Heart right ventricle (tissue), 16 donors: ENCODE measurements at regions of chr17 and their contacts with region 1.

Region 1: GRCh38 chr17:42019509-42020404 is at the start of gene NKIRAS2:
- DNase-seq: peak; percentile 94 to 95
- ATAC-seq: peak; percentile 76 to 84 (median 80)
- H3K4me3 ChIP-seq: peak within 1 kb of the TSS; percentile 73 to 98 (median 92)
- H3K27ac ChIP-seq: peak within 1 kb of the TSS; percentile 52 to 96 (median 90)
- H3K4me1 ChIP-seq: peaks cover 7 to 65% (median 49%) of the 10 kb centered on the region in 9 donors
- H3K27me3 ChIP-seq: no peaks in the 10 kb centered on the region
- CTCF ChIP-seq: peak; percentile 84 to 98 (median 96)
- total RNA-seq, gene NKIRAS2: 50.1 to 64.1 (median 57.2) TPM

Region 2: DNA sequence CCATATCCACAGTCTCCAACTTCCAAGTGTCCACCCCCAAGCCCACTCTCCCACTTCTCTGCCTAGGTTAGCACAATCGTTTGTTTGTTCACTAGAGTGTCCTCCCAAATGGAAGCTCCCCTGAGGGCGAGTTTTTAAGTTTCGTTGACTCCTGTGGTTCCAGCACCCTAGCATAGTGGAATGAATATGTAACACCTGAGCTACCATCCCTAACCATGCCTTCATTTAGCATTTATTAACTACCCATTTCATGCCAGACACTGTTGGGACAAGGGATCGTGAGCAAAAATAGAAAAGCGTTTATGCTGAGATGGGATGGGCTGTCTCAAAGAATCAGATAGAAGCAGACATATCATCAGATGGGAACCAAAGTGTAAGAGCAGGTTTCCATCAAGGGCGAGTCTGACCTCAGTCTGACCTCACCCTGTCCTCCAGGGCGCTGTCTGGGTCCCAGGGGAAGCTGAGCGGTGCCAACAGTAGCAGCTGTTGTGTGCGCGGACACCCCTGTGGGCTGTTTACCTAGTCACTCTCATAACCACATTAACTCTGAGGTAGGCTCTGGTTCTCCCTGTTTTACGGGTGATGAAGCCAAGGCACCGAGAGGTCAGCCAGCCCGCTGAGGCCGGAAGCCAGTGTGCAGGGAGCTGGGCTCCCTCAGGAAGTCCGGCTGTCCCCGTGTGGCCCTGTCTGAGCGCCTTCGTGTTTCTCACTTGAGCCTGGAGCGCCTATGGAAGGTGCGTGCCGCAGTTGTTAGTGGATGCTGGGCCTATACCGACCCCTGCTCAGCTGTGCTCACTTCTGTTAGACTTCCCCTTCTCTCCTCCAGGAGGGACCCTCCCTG is 47.0 kb before region 1 on chr17:
- intact Hi-C with region 1: loop called in 7 of 10 experiments (anchors 5 kb)
- DNase-seq: peak; percentile 49 to 55
- ATAC-seq: peak; percentile 27 to 80 (median 64)
- H3K4me3 ChIP-seq: no peak overlapping the region
- H3K27ac ChIP-seq: peak overlapping the region in 9 of 10 donors; percentile 41 to 85 (median 50)
- H3K4me1 ChIP-seq: peaks cover 7 to 48% (median 27%) of the 10 kb centered on the region in 9 donors
- H3K27me3 ChIP-seq: no peaks in the 10 kb centered on the region
- CTCF ChIP-seq: no peak

Region 3: DNA sequence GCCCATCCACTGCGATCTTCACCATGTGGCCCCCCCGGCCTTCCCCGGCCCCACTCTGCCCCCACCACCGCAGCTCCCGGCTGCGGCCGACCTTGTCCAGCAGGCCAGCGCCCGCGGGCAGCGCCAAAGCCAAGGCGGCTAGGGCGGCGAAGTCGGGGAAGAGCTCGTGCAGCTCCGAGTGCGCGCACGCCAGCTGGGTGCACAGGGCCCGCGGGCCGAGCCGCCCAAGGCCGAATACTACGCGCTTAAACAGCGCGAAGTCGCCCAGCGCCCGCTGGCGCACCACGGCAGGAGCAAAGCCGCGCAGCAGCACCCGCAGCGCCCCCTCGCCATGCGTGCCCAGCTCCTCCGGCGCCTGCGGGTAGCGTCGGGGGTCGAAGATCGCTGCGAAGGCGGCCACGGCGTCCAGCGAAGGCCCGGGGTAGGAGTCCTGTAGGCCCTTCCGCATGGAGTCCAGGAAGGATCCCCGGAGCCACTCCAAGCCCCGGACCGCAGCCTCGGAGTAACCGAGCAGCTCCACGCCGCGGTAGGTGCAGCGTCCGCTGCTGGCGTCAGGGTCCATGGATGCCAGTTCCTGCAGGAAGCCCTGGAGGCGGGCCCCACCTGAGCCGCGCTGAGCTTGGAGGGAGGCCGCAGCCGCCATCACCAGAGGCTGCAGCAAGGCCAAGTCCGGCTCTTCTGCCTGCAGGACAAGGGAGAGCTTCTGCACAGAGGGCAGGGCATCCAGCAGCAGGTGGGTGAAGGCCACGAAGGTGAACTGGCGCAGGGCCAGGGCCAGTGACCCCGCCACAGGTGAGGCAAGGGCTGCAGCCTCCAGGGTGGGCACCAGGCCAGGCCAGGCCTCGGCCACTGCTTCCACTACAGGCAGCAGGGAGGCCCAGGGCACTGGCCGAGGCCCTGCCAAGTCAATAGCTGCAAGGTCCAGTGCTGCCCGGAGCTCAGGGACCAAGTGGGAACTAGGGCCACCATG is 20.3 kb after region 1 on chr17:
- intact Hi-C with region 1: no loop called
- DNase-seq: no peak
- ATAC-seq: peak in 6 of 8 donors; percentile 14 to 63 (median 24)
- H3K4me3 ChIP-seq: peak overlapping the region in 7 of 10 donors; percentile 8 to 35 (median 25)
- H3K27ac ChIP-seq: no peak overlapping the region
- H3K4me1 ChIP-seq: peaks cover 0 to 10% (median 5%) of the 10 kb centered on the region in 9 donors
- H3K27me3 ChIP-seq: peaks cover 0 to 31% (median 15%) of the 10 kb centered on the region in 7 donors
- CTCF ChIP-seq: no peak

Region 4: GRCh38 chr17:42101513-42102319 is 82.0 kb after region 1 on chr17:
- intact Hi-C with region 1: loop called in 3 of 10 experiments (anchors 2 to 5 kb)
- DNase-seq: peak; percentile 71 to 85
- ATAC-seq: peak; percentile 63 to 87 (median 82)
- H3K4me3 ChIP-seq: no peak overlapping the region
- H3K27ac ChIP-seq: no peak overlapping the region
- H3K4me1 ChIP-seq: peaks cover 0 to 17% (median 10%) of the 10 kb centered on the region in 9 donors
- H3K27me3 ChIP-seq: peaks cover 2 to 21% (median 19%) of the 10 kb centered on the region in 7 donors
- CTCF ChIP-seq: peak; percentile 69 to 89 (median 83)

Region 5: DNA sequence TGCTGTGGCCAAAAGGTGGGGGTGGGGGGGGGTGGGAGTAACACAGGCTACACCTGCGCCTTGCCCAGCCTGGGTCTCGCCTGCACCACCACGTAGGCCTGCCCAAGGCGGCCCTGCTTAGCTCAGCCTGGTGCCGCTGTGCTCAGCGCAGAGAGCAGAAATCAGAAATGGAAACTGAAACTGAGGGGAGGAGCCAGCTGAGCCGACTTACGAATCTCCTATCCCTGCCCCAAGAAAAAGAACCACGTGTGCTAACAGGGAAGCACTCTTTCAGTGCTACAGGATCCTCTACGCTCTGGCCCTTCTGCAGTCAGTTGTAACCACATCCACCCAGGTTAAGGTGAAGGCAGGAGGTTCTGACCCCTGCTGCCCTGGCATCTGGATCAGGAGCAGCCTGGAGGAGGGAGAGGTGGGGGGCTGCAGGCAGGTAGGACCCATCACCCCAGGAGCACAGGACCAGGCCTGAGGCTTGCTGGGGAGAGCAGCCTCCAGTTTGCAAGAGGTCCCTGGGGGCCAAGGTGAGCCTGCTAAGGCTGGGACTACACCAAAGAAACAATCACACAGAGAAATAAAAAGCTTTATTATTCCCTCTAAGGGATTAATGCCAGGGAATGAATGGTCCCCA is 92.9 kb after region 1 on chr17 and contains the start of gene DHX58:
- intact Hi-C with region 1: loop called in 4 of 10 experiments (anchors 2 to 5 kb)
- DNase-seq: peak; percentile 56 to 82
- ATAC-seq: peak; percentile 65 to 93 (median 85)
- H3K4me3 ChIP-seq: peak within 1 kb of the TSS; percentile 16 to 69 (median 62)
- H3K27ac ChIP-seq: peak within 1 kb of the TSS; percentile 69 to 93 (median 90)
- H3K4me1 ChIP-seq: peaks cover 7 to 37% (median 17%) of the 10 kb centered on the region in 9 donors
- H3K27me3 ChIP-seq: no peaks in the 10 kb centered on the region
- CTCF ChIP-seq: peak in 1 of 9 donors; percentile 9
- total RNA-seq, gene DHX58: 2.2 to 8.4 (median 4.0) TPM